Activated naive CD4-positive, alpha-beta T cell treated with anti-CD3 and anti-CD28 coated beads for 36 hours (primary cell): ENCODE measurements at regions of chr2 and their contacts with region 1.

Region 1: DNA sequence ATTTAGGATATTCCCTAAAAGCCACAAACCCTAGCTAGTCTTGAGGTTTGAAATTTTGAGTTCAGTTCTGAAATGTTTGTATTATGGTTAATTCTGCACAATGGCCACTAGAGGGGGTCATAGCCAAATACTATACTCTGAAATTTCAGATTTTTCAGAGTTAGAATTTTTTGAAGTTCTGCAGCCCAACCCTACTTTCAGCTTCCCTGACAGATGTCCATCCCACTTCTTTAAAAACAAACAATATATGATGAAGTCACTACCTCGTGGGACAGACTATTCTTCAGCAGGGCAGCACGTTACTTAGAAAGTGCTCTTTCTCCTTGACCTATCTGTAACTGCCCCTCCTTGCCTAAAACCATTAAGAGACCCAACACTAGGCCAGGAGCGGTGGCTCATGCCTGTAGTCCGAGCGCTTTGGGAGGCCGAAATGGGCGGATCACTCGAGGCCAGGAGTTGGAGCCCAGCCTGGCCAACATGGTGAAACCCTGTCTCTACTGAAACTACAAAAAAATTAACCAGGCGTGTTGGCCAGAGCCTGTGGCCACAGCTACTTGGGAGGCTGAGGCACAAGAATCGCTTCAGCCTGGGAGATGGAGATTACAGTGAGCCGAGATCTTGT is 48.2 kb upstream of the PAPOLG start:
- DNase-seq: no peak
- H3K4me3 Mint-ChIP-seq: no peak overlapping the region
- H3K27ac Mint-ChIP-seq: no peak overlapping the region
- H3K4me1 Mint-ChIP-seq: no peaks in the 10 kb centered on the region
- H3K27me3 Mint-ChIP-seq: no peaks in the 10 kb centered on the region

Region 2: GRCh38 chr2:60337140-60337494 is 370.7 kb before region 1 on chr2:
- CTCF ChIA-PET with region 1: no interaction called
- intact Hi-C with region 1: no loop called
- DNase-seq: no peak
- H3K4me3 Mint-ChIP-seq: no peak overlapping the region
- H3K27ac Mint-ChIP-seq: no peak overlapping the region
- H3K4me1 Mint-ChIP-seq: no peaks in the 10 kb centered on the region
- H3K27me3 Mint-ChIP-seq: no peaks in the 10 kb centered on the region

Region 3: GRCh38 chr2:60544062-60544461 is 163.8 kb before region 1 on chr2:
- CTCF ChIA-PET with region 1: no interaction called
- intact Hi-C with region 1: no loop called
- DNase-seq: no peak
- H3K4me3 Mint-ChIP-seq: no peak overlapping the region
- H3K27ac Mint-ChIP-seq: no peak overlapping the region
- H3K4me1 Mint-ChIP-seq: peaks cover 4% of the 10 kb centered on the region
- H3K27me3 Mint-ChIP-seq: peaks cover 48% of the 10 kb centered on the region

Region 4: DNA sequence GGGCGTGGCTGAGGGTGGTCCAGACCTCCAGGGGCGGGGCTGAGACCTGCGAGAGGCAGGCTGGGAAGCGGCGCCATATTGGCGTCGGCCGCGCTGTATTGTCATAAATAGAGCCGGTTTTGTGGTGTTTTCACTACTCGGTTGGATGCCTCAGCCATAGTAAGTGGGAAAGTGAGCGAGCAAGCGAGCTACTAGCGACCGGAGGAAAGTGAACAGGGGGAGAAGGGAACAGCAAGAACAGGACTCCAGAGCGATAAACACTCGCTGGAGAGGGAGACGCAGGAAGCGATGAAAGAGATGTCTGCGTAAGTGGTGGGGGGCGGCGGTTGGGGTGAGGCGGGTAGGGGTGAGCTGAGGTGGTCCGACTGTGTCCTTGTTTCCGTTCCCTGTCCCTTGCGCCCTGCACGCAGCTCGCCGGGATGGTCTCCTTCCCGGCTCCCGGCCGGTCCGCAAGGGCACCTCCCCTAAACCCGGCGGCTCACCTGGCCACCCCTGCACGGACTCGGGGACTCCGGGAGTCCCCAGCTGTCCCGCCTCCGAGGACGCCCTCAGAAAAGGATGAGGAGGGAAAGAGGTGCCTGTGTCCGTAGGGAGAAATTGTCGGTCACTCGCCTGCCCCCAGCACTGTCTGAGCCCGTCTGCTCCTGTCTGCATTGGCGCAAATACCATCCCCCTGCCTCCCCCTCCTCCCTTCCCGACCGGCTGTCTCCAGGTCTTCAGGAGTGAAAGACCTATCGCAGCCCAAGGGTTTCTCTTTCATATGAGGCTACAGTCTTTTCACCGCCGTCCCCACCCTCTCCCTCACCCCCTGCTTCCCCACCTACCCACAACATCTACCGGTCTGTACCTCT is 48.6 kb after region 1 on chr2 and contains the start of gene PAPOLG:
- CTCF ChIA-PET with region 1: interaction called, 5 read pairs
- intact Hi-C with region 1: loop called (anchors 2 kb)
- DNase-seq: peak; percentile 99
- H3K4me3 Mint-ChIP-seq: peak within 1 kb of the TSS; percentile 99
- H3K27ac Mint-ChIP-seq: peak within 1 kb of the TSS; percentile 97
- H3K4me1 Mint-ChIP-seq: peaks cover 40% of the 10 kb centered on the region
- H3K27me3 Mint-ChIP-seq: no peaks in the 10 kb centered on the region
- total RNA-seq, gene PAPOLG: 14.1 to 16.1 TPM

Region 5: DNA sequence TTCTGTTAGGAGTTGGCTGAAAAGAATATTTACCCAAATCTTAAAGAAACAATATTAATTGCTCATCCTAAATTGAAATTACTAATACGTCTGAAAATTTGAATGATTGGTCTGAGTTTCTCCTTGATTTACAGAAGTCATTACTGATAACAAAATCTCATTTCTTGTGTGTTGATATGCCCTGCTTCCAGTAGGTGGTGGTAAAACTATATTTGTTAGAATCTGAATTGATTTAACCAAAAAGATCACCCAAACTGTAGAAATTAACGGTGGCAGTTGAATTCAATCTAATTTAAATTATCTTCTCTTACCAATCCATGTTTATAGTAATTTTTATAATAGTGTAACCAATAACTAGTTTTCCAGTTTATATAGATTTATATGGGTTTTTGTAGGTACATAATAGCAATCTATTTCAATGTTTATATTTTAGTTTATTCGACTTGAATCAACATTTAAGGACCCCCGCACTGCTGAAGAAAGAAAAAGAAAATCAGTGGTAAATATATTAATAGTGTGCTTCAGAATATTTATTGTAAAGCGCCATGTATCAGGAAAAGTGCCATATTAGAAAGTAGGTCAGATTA is 86.5 kb after region 1 on chr2:
- CTCF ChIA-PET with region 1: interaction called, 3 read pairs
- intact Hi-C with region 1: loop called (anchors 5 kb)
- DNase-seq: no peak
- H3K4me3 Mint-ChIP-seq: no peak overlapping the region
- H3K27ac Mint-ChIP-seq: no peak overlapping the region
- H3K4me1 Mint-ChIP-seq: peaks cover 20% of the 10 kb centered on the region
- H3K27me3 Mint-ChIP-seq: no peaks in the 10 kb centered on the region